Mammary epithelial cell (primary cell): ENCODE measurements at regions of chrX and their contacts with region 1.

Region 1: GRCh38 chrX:17824980-17825379 is 36.1 kb downstream of the RAI2 start:
- DNase-seq: no peak
- H3K4me3 ChIP-seq: no peak overlapping the region
- H3K27ac ChIP-seq: no peak overlapping the region
- H3K4me1 ChIP-seq: no peaks in the 10 kb centered on the region
- H3K27me3 ChIP-seq: no peaks in the 10 kb centered on the region
- CTCF ChIP-seq: no peak

Region 2: GRCh38 chrX:17769701-17770269 is 55.2 kb before region 1 on chrX:
- CTCF ChIA-PET with region 1: no interaction called
- dilution Hi-C with region 1: no loop called
- in situ Hi-C with region 1: no loop called
- intact Hi-C with region 1: loop called (anchors 2 kb)
- DNase-seq: no peak
- H3K4me3 ChIP-seq: no peak overlapping the region
- H3K27ac ChIP-seq: no peak overlapping the region
- H3K4me1 ChIP-seq: no peaks in the 10 kb centered on the region
- H3K27me3 ChIP-seq: peaks cover 2% of the 10 kb centered on the region
- CTCF ChIP-seq: no peak